HAP-1 (cell line): ENCODE measurements at regions of chr17 and their contacts with region 1.

Region 1: GRCh38 chr17:47649153-47649971 is at the start of gene KPNB1:
- DNase-seq: peak; percentile 99
- H3K4me3 ChIP-seq: peak within 1 kb of the TSS; percentile 81
- H3K4me1 ChIP-seq: peaks cover 28% of the 10 kb centered on the region
- H3K27me3 ChIP-seq: no peaks in the 10 kb centered on the region

Region 2: DNA sequence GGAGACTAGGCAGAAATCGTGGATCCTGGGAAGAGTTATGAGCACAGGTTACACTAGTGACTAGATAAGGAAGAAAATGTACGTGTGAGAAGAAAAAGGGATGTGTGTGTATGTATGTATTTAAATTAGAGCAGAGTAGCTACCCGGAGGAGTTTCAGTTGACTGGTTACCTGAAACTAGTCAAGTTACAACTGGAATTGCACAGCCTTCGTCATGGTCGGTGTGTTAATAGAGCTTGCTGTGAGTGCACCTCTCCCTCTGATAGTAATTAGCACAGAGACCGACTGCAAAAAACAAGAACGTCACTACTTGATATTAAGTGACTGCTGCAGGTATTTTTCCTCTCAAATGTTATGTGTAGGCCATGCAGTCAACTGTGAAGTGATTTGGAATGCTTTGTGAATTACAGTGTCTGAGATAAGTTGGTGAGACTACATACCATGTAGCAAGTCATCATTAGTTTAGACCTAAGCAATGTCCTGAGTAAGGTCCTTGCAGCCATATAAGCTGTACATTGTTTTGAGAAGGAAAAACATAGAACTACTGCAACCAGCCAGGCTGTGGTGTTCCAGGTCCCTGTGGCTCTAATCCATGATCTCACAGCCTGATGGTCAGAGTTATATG is 926.6 kb before region 1 on chr17:
- in situ Hi-C with region 1: loop called (anchors 25 kb)
- DNase-seq: no peak
- H3K4me3 ChIP-seq: no peak overlapping the region
- H3K4me1 ChIP-seq: peaks cover 36% of the 10 kb centered on the region
- H3K27me3 ChIP-seq: no peaks in the 10 kb centered on the region